AG04449 (cell line): ENCODE measurements at regions of chr10 and their contacts with region 1.

Region 1: DNA sequence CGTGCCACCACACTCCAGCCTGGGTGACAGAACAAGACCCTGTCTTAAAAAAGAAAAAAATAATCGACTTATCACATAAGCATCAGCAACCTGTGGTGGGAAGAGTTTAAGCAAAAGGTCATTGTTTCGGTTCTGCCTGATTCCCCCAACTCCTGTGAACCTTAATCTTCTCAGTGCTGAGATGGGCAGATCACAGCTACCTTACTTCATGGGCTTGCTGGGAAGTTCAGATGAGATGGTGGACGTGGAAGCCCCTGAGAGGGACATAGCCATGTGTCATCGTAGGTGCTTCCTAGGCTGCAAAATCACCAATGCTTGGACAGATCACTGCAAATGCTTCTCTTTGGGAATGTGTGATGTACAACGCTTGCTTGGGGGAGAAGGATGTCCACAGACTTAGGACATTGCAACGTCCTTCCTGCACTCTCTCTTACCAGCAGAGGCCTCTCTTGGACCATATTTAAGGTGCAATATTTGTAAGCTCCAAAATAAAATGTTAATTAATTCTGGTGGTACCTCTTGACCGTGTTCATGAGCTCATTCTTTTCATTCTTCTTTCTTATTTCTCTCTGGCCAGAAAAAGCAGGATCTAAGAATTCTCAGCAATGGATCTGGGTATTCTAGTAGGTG is 8.6 kb downstream of the GJD4 start:
- DNase-seq: no peak
- H3K4me3 ChIP-seq: no peak overlapping the region
- CTCF ChIP-seq: peak; percentile 47

Region 2: GRCh38 chr10:35574924-35575352 is 38.8 kb before region 1 on chr10:
- CTCF ChIA-PET with region 1: interaction called, 12 read pairs
- POLR2A ChIA-PET with region 1: no interaction called
- DNase-seq: peak; percentile 86
- H3K4me3 ChIP-seq: no peak overlapping the region
- CTCF ChIP-seq: peak; percentile 57

Region 3: DNA sequence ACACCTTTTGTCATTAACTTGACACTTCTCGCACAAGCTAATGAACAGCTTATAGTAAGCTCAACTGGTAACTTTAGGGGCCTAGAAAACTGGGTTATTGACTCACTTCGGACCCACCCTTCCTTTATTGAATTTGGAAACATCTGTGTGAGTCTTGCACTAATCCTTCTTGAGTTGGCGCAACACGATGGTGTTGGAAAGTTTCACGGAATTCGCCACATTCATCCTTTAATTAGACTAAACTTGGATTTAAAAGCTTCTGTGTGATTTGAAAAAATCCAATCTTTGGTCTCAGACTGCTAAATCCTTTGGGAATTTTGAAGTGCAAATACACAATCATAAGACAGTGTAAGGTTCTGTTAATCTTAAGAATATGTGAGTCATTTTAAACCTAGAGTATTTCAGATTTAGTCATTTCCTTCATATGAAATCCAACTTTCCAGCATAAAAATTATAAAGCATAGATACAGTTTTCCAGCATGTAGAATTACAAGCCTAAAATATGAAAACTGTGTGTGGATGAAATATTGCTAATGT is 13.3 kb after region 1 on chr10:
- CTCF ChIA-PET with region 1: interaction called, 27 read pairs
- POLR2A ChIA-PET with region 1: no interaction called
- DNase-seq: no peak
- H3K4me3 ChIP-seq: no peak overlapping the region
- CTCF ChIP-seq: no peak

Region 4: DNA sequence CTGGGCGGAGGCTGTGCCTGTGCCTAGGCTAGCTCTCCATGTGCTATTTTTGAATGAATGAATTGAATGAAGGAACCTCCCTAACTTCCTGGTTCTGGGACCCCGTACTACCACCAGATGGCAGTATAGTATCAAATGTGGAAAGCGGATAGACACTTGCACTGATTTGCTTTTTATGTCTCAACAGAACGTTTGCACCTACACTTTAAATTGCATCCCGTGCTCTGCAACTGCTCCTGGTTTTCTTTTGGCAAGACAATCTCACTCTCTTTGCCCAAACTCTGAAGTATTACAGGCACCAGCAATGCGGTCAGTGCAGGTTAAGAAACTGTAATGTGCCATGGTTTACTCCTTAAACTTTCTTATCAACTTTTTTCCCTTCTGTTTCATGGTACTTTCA is 21.9 kb after region 1 on chr10:
- CTCF ChIA-PET with region 1: interaction called, 28 read pairs
- POLR2A ChIA-PET with region 1: no interaction called
- DNase-seq: no peak
- H3K4me3 ChIP-seq: no peak overlapping the region
- CTCF ChIP-seq: peak; percentile 74

Region 5: GRCh38 chr10:35700487-35700882 is 86.8 kb after region 1 on chr10:
- CTCF ChIA-PET with region 1: no interaction called
- POLR2A ChIA-PET with region 1: no interaction called
- DNase-seq: no peak
- H3K4me3 ChIP-seq: no peak overlapping the region
- CTCF ChIP-seq: no peak

Region 6: DNA sequence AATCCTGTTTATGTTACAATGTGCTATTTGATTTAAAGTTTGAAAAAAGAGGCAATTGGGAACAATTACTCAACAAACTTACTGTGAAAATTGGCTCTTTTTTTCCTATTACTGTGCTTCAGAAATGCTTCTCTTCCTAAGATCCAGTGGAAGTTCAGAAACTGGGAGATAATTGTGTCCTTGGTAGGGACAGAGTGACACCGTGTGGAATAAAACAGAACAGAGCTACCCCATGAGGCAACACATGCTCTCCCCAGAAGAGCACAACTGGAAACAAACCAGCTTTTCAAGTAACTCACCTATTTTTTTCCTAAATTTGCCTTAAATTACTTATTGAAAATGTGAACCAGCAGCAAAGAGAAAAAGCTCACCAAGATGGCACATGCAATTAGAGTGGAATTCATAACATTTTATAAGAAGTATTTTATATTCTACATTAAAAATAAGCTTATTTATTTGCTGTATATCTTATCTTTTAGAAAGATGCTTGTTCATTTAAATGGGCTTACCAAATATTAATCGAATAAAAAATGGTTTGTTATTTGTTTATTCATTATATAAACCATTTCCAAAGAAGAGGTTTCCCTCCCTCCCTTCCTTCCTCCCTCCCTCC is 1165.6 kb after region 1 on chr10:
- CTCF ChIA-PET with region 1: interaction called, 35 read pairs
- POLR2A ChIA-PET with region 1: no interaction called
- DNase-seq: peak; percentile 41
- H3K4me3 ChIP-seq: no peak overlapping the region
- CTCF ChIP-seq: peak; percentile 65

Region 7: GRCh38 chr10:36872702-36873393 is 1259.1 kb after region 1 on chr10:
- CTCF ChIA-PET with region 1: interaction called, 24 read pairs
- POLR2A ChIA-PET with region 1: no interaction called
- DNase-seq: no peak
- H3K4me3 ChIP-seq: no peak overlapping the region
- CTCF ChIP-seq: no peak